ENCODE measurements at regions of chr19 and their contacts with region 1.

Region 1: GRCh38 chr19:4676955-4677731 is 7.0 kb upstream of the MYDGF start:
- DNase-seq: peak in 1 of 2 experiments; percentile 81
- ATAC-seq: peak; percentile 77 to 80
- H3K4me3 ChIP-seq: no peak overlapping the region
- H3K27ac ChIP-seq: peak overlapping the region in 1 of 2 experiments; percentile 55; a peak in 1 of 6 replicates
- H3K4me1 ChIP-seq: no peaks in the 10 kb centered on the region
- CTCF ChIP-seq: peak; percentile 42
- EP300 ChIP-seq: no peak
- POLR2A ChIP-seq: no peak
- RAD21 ChIP-seq: peak in 1 of 2 experiments; percentile 28; a peak in 1 of 5 replicates

Region 2: GRCh38 chr19:4647676-4648644 is 29.2 kb before region 1 on chr19:
- CTCF ChIA-PET with region 1: no interaction called
- POLR2A ChIA-PET with region 1: no interaction called
- DNase-seq: no peak
- ATAC-seq: peak in 1 of 2 experiments; percentile 47; a peak in 3 of 6 replicates
- H3K4me3 ChIP-seq: no peak overlapping the region
- H3K27ac ChIP-seq: no peak overlapping the region
- H3K4me1 ChIP-seq: no peaks in the 10 kb centered on the region
- CTCF ChIP-seq: no peak
- EP300 ChIP-seq: no peak
- POLR2A ChIP-seq: no peak
- RAD21 ChIP-seq: no peak

Region 3: DNA sequence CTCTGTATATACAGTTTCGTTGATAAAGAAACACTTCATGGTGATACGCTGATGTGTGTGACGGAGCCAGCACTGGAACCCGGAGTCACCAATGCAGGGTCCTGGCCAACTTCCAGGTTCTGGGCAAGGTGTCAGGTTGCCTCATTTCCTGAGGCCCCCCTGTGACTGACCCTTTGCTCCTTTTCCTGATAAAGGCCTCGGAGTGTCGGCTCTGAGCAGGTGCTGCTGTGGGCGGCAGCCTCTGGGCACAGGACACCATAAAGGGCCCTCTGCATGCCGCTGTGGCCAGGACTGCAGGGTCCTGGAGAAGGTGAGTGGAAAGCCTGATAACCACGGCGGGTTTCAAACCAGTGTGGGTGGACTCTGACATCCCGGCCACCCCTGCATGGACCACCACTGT is 10.3 kb after region 1 on chr19:
- CTCF ChIA-PET with region 1: interaction called, 10 read pairs
- POLR2A ChIA-PET with region 1: no interaction called
- DNase-seq: no peak
- ATAC-seq: no peak
- H3K4me3 ChIP-seq: no peak overlapping the region
- H3K27ac ChIP-seq: no peak overlapping the region
- H3K4me1 ChIP-seq: no peaks in the 10 kb centered on the region
- CTCF ChIP-seq: no peak
- EP300 ChIP-seq: no peak
- POLR2A ChIP-seq: no peak
- RAD21 ChIP-seq: no peak

Measured in A549 (cell line).